ENCODE measurements at regions of chr11 and their contacts with region 1.

Region 1: GRCh38 chr11:65859200-65859811 is 927 bp upstream of the MUS81 start:
- DNase-seq: peak; percentile 99 to 100 (median 99)
- ATAC-seq: peak; percentile 77 to 87 (median 83)
- H3K4me3 ChIP-seq: peak overlapping the region; percentile 74 to 100 (median 92)
- H3K27ac ChIP-seq: peak overlapping the region; percentile 94 to 99 (median 98)
- H3K4me1 ChIP-seq: peaks cover 0 to 57% (median 32%) of the 10 kb centered on the region in 12 donors
- H3K27me3 ChIP-seq: no peaks in the 10 kb centered on the region
- CTCF ChIP-seq: peak in 4 of 12 donors; percentile 7 to 42 (median 25)
- POLR2A ChIP-seq: peak; percentile 82 to 98

Region 2: GRCh38 chr11:65873318-65874156 is 14.2 kb after region 1 on chr11:
- intact Hi-C with region 1: loop called in 3 of 10 experiments (anchors 1 to 2 kb)
- DNase-seq: peak; percentile 95 to 97 (median 96)
- ATAC-seq: peak; percentile 93 to 97 (median 94)
- H3K4me3 ChIP-seq: peak overlapping the region; percentile 32 to 95 (median 68)
- H3K27ac ChIP-seq: peak overlapping the region; percentile 75 to 99 (median 96)
- H3K4me1 ChIP-seq: peaks cover 3 to 39% (median 22%) of the 10 kb centered on the region in 12 donors
- H3K27me3 ChIP-seq: no peaks in the 10 kb centered on the region
- CTCF ChIP-seq: no peak
- POLR2A ChIP-seq: peak; percentile 52 to 91

Region 3: GRCh38 chr11:65919146-65920033 is 60.1 kb after region 1 on chr11 and contains the start of gene DRAP1:
- intact Hi-C with region 1: loop called in 2 of 10 experiments (anchors 1 to 2 kb)
- DNase-seq: peak; percentile 99 to 100 (median 99)
- ATAC-seq: peak; percentile 92 to 96 (median 94)
- H3K4me3 ChIP-seq: peak within 1 kb of the TSS; percentile 85 to 100 (median 96)
- H3K27ac ChIP-seq: peak within 1 kb of the TSS; percentile 95 to 100 (median 97)
- H3K4me1 ChIP-seq: peaks cover 16 to 55% (median 48%) of the 10 kb centered on the region in 12 donors
- H3K27me3 ChIP-seq: no peaks in the 10 kb centered on the region
- CTCF ChIP-seq: peak in 2 of 12 donors; percentile 15 to 25
- POLR2A ChIP-seq: peak; percentile 38 to 79
- total RNA-seq, gene DRAP1: 76.5 to 144 (median 96.9) TPM

Region 4: GRCh38 chr11:66268283-66268951 is 409.1 kb after region 1 on chr11 and contains the start of gene RAB1B:
- intact Hi-C with region 1: loop called in 1 of 10 experiments (anchors 10 kb)
- DNase-seq: peak; percentile 100
- ATAC-seq: peak; percentile 89 to 93 (median 90)
- H3K4me3 ChIP-seq: peak within 1 kb of the TSS; percentile 61 to 99 (median 92)
- H3K27ac ChIP-seq: peak within 1 kb of the TSS; percentile 89 to 99 (median 97)
- H3K4me1 ChIP-seq: peaks cover 4 to 34% (median 27%) of the 10 kb centered on the region in 12 donors
- H3K27me3 ChIP-seq: no peaks in the 10 kb centered on the region
- CTCF ChIP-seq: no peak
- POLR2A ChIP-seq: peak; percentile 6 to 86
- total RNA-seq, gene RAB1B: 111 to 149 (median 128) TPM

Region 5: DNA sequence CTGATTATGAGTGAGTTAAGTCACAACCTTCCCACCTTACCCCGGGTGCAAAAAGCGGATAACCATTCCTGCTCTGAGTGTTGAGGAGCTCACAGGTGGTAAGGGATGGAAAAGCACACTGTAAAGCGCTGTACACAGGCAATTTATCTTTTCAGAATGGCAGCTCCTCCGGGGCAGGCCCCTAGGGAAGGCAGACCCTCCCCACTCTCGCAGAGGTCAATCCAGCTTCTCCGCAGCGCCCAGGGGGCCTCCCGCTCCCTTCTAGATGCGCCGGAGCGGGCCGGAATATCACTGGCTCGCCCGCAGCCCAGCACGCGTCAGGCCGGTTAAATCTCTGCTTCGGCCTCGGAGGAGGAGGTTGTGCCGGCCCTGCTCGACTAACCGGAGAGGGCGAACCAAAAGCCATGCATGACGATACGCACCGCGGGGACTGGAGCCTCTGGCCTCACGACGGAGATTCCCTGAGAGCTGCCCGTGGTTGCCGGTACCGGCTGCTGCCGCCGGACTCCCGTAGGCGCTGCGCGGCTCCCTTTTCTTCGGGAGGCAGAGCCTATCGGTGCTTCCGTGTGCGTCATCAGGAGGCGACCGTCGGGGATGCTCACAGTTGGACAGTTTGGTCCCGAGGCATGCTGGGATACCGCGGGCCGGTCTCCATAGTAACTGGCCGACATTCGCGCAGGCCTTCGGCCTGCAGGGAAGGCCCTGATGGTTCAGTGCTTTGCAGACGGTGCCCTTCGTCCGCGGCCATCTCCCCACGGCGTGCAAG is 485.4 kb after region 1 on chr11 and contains the start of gene BRMS1:
- intact Hi-C with region 1: loop called in 1 of 10 experiments (anchors 10 kb)
- DNase-seq: peak; percentile 98 to 100 (median 99)
- ATAC-seq: peak; percentile 89 to 96 (median 91)
- H3K4me3 ChIP-seq: peak within 1 kb of the TSS; percentile 84 to 100 (median 96)
- H3K27ac ChIP-seq: peak within 1 kb of the TSS in 11 of 12 donors; percentile 41 to 87 (median 80)
- H3K4me1 ChIP-seq: peaks cover 4 to 47% (median 34%) of the 10 kb centered on the region in 12 donors
- H3K27me3 ChIP-seq: no peaks in the 10 kb centered on the region
- CTCF ChIP-seq: peak in 3 of 12 donors; percentile 14 to 19 (median 17)
- POLR2A ChIP-seq: peak in 1 of 2 donors; percentile 89
- total RNA-seq, gene BRMS1: 9.7 to 39.2 (median 16.5) TPM